ENCODE measurements at regions of chr12 and their contacts with region 1.

Region 1: GRCh38 chr12:133037207-133038005 is at the start of gene ZNF84:
- DNase-seq: peak; percentile 98
- ATAC-seq: peak; percentile 97
- H3K4me3 Mint-ChIP-seq: peak within 1 kb of the TSS; percentile 85
- H3K27ac Mint-ChIP-seq: peak within 1 kb of the TSS; percentile 94
- H3K4me1 Mint-ChIP-seq: peaks cover 10% of the 10 kb centered on the region
- H3K27me3 Mint-ChIP-seq: no peaks in the 10 kb centered on the region
- total RNA-seq, gene ZNF84: 21.5 to 24.1 TPM

Region 2: DNA sequence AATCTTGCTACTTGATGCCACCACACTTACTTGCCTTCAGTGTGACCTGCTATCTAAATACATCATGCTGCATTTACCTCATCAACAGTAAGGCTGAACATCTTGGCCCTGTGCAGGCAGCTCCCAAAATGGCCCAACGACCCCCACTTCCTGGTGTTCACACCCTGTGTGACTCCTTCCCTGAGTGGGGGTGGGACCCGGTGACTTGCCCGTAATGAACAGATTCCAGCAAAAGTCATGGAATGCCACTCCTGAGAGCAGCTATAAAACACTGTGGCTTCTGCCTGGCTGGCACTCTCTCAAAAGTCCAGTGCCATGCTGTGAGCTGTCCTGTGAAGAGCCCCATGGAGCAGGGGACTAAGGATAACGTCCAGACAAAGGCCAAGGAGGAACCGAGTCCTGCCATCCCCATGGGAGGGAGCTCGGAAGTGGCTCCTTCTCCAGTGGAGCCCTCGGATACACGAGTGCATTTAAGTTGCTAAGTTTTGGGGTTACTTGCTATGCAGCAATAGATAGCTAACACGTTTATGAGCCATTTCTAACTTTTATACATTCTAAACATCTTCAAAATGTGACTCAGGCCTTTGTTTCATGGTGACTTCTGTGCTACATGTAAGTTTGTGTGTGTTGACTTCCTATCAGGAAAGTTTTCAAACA is 385.8 kb before region 1 on chr12:
- CTCF ChIA-PET with region 1: no interaction called
- POLR2A ChIA-PET with region 1: no interaction called
- intact Hi-C with region 1: no loop called
- DNase-seq: no peak
- ATAC-seq: no peak
- H3K4me3 Mint-ChIP-seq: no peak overlapping the region
- H3K27ac Mint-ChIP-seq: no peak overlapping the region
- H3K4me1 Mint-ChIP-seq: peaks cover 2% of the 10 kb centered on the region
- H3K27me3 Mint-ChIP-seq: no peaks in the 10 kb centered on the region

Region 3: DNA sequence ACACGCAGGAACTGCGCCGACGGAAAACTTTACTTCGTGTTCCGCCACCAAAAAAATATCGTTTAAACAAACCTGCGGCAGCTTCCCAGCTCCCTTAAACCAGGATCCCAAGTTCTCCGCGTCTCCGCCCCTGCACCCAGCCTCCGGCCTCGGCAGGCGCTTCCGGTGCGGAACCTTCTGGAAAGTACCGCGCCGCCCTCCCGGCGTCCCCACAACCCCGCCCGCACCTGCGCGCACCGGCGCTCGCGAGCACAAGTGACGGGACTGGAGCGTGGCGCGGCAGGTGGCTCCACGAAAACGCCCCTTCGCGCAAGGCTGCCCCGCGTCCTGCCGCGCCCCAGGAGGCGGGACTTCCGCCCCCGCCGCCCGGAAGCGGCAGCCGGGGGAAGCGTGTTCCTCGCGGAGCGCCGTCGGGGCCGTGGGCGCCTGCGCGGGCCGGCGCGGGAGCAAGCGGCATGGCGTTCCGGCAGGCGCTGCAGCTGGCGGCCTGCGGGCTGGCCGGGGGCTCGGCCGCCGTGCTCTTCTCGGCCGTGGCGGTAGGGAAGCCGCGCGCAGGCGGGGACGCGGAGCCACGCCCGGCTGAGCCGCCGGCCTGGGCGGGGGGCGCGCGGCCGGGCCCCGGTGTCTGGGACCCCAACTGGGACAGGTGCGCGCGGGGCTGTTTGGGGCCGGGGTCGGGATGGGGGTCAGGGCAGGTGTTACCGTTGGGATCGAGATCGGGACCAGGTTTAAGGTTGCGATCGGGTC is 326.8 kb before region 1 on chr12 and contains the start of gene PGAM5:
- CTCF ChIA-PET with region 1: no interaction called
- POLR2A ChIA-PET with region 1: no interaction called
- intact Hi-C with region 1: loop called in 1 of 2 experiments (anchors 1 kb)
- DNase-seq: peak; percentile 92
- ATAC-seq: peak; percentile 92
- H3K4me3 Mint-ChIP-seq: peak within 1 kb of the TSS; percentile 75
- H3K27ac Mint-ChIP-seq: peak within 1 kb of the TSS; percentile 66
- H3K4me1 Mint-ChIP-seq: peaks cover 24% of the 10 kb centered on the region
- H3K27me3 Mint-ChIP-seq: no peaks in the 10 kb centered on the region
- total RNA-seq, gene PGAM5: 65.6 to 74.0 TPM

Region 4: GRCh38 chr12:132956011-132956788 is 81.2 kb before region 1 on chr12 and contains the start of gene ZNF605:
- CTCF ChIA-PET with region 1: no interaction called
- POLR2A ChIA-PET with region 1: no interaction called
- intact Hi-C with region 1: loop called in 1 of 2 experiments (anchors 1 kb)
- DNase-seq: peak; percentile 93
- ATAC-seq: peak; percentile 91
- H3K4me3 Mint-ChIP-seq: peak within 1 kb of the TSS; percentile 93
- H3K27ac Mint-ChIP-seq: peak within 1 kb of the TSS; percentile 88
- H3K4me1 Mint-ChIP-seq: peaks cover 22% of the 10 kb centered on the region
- H3K27me3 Mint-ChIP-seq: no peaks in the 10 kb centered on the region
- total RNA-seq, gene ZNF605: 8.0 to 8.3 TPM

Region 5: DNA sequence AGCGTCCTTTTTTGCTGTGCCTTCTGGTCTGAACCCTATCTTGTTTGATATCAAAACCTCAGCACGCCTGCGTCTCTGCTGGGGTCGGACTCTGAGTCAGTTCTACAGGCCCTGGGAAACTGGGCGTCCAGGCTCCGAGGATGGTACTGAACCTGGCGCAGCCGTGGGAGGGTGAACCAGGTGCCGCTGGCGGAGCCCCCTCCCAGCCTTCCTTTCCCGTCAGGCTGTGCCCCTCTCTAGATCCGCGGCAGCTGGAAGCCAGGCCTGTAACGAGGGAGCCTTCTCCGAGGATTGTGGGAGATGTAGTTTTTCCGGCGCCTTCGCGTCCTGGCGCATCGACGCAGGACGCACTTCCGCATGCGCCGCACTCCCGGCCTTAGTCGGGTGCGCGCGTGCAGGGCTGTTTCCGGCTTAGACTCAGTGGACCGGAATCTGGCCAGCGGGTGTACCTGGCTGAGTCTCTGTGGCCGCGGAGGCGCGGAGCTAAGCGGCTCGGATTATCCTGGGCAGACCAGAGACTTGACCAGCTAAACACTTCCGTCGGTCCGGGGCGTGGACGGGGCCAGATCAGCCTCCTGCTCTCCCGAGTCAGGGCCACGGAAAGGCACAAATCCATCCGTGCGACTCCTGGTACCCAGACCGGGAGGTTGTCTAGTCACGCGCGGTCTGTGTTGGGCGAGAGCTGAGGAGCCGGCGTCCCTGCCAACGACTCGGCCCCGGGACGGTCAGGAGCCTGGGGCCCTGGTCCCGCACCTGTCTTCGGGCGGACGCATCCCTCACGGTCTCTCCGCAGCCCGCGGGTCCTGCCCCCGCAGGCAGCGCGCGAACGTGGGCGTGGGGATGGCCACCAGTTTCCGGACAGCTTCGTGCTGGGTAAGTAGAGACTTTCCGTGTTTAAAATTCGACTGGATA is 51.1 kb before region 1 on chr12 and contains the start of gene ZNF26:
- CTCF ChIA-PET with region 1: no interaction called
- POLR2A ChIA-PET with region 1: no interaction called
- intact Hi-C with region 1: loop called (anchors 1 kb)
- DNase-seq: peak; percentile 94
- ATAC-seq: peak; percentile 97
- H3K4me3 Mint-ChIP-seq: peak within 1 kb of the TSS; percentile 79
- H3K27ac Mint-ChIP-seq: peak within 1 kb of the TSS; percentile 96
- H3K4me1 Mint-ChIP-seq: peaks cover 26% of the 10 kb centered on the region
- H3K27me3 Mint-ChIP-seq: peaks cover 4% of the 10 kb centered on the region
- total RNA-seq, gene ZNF26: 12.3 to 17.0 TPM

Region 6: GRCh38 chr12:133023566-133023965 is 13.8 kb before region 1 on chr12:
- CTCF ChIA-PET with region 1: no interaction called
- POLR2A ChIA-PET with region 1: no interaction called
- intact Hi-C with region 1: no loop called
- DNase-seq: no peak
- ATAC-seq: no peak
- H3K4me3 Mint-ChIP-seq: no peak overlapping the region
- H3K27ac Mint-ChIP-seq: no peak overlapping the region
- H3K4me1 Mint-ChIP-seq: no peaks in the 10 kb centered on the region
- H3K27me3 Mint-ChIP-seq: no peaks in the 10 kb centered on the region

Region 7: DNA sequence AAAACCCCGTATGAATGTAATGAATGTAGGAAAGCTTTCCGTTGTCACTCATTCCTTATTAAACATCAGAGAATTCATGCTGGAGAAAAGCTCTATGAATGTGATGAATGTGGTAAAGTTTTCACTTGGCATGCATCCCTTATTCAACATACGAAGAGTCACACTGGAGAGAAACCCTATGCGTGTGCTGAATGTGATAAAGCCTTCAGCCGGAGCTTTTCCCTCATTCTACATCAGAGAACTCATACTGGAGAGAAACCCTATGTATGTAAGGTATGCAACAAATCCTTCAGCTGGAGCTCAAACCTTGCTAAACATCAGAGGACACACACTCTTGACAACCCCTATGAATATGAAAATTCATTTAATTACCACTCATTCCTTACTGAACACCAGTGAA is 68.8 kb after region 1 on chr12:
- CTCF ChIA-PET with region 1: no interaction called
- POLR2A ChIA-PET with region 1: no interaction called
- intact Hi-C with region 1: no loop called
- DNase-seq: no peak
- ATAC-seq: no peak
- H3K4me3 Mint-ChIP-seq: no peak overlapping the region
- H3K27ac Mint-ChIP-seq: no peak overlapping the region
- H3K4me1 Mint-ChIP-seq: peaks cover 2% of the 10 kb centered on the region
- H3K27me3 Mint-ChIP-seq: no peaks in the 10 kb centered on the region

Region 8: DNA sequence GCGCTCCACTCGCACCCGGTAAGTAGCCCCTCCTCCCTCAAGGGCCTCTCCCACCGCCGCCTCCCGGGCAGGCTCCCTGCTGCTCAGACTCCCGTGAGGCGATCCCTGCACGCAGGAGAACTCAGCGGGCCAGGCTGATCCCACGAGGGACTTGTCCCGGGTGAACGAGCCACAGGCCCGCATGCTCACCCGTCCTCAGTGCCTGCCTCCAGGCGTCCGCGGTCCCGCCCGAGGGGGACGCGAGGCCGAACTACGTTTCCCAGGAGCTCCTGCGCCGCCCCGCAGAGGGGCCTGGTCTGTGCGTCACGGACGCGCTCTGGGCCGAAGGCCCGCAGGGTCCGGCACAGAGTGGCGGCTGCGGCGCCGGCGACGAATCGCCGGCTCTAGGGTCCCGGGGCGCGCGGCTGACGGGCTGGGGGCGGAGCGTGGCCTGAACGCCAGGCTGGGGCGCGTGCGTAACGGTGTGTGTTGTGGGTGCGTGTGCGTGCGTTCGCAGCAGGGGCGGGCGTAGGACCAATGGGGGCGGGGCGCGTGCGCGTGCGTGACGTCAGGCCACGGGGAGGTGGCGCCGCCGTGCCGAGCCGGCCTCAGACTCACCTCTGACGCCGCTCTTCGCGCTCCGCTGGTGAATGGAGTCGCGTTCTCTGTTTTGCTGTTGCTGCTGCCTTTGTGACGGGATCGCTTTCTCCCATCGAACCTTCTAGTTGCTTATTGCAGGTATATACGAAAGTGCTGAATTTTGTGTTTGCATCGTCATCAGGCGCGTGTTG is 92.8 kb after region 1 on chr12 and contains the starts of genes ZNF10 and ZNF891:
- CTCF ChIA-PET with region 1: no interaction called
- POLR2A ChIA-PET with region 1: no interaction called
- intact Hi-C with region 1: loop called (anchors 1 kb)
- DNase-seq: peak; percentile 98
- ATAC-seq: peak; percentile 90
- H3K4me3 Mint-ChIP-seq: peak within 1 kb of the TSS; percentile 86
- H3K27ac Mint-ChIP-seq: peak within 1 kb of the TSS; percentile 98
- H3K4me1 Mint-ChIP-seq: peaks cover 15% of the 10 kb centered on the region
- H3K27me3 Mint-ChIP-seq: no peaks in the 10 kb centered on the region
- total RNA-seq, gene ZNF10: 4.8 to 5.1 TPM
- total RNA-seq, gene ZNF891: 1.9 to 2.1 TPM

Region 9: DNA sequence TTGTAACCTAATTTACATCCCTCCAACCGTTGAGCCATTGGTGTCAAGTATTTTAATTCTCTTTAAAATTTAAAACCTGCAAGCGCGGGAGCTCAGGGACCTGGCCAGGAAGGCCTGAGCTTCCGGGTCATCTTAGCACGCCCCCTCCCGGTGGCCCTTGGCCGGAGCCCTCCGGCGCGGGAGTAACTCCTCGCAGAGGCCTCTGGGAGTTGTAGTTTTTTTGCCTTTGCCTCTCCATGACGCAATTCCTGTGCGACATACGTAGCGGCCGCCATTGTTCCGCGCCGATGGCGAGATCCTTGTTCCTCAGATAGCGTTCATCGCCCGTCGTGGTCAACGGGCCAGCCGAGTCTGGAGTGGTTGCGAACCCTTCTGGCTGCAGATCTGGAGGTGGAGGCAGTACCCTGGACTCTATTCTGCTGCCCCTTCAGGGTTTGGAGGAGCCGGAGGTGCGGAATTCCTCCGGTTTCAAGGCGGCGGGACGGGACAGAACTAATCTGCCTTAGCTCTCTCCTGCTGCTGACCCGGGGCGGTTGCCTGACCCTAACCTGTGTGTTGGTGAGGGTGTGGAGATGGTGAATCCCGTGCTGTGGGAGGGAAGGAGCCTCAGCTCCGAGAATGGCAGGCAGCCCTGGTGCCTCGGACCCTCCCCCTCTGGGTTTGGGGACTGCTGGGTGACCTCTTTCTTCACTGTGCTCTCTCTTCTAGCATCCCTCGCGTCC is 144.0 kb after region 1 on chr12 and contains the start of gene ZNF268:
- CTCF ChIA-PET with region 1: interaction called, 3 read pairs
- POLR2A ChIA-PET with region 1: no interaction called
- intact Hi-C with region 1: loop called in 1 of 2 experiments (anchors 1 kb)
- DNase-seq: peak; percentile 95
- ATAC-seq: peak; percentile 96
- H3K4me3 Mint-ChIP-seq: peak within 1 kb of the TSS; percentile 90
- H3K27ac Mint-ChIP-seq: peak within 1 kb of the TSS; percentile 95
- H3K4me1 Mint-ChIP-seq: peaks cover 11% of the 10 kb centered on the region
- H3K27me3 Mint-ChIP-seq: no peaks in the 10 kb centered on the region
- total RNA-seq, gene ZNF268: 14.0 to 14.6 TPM

Measured in activated CD4-positive, alpha-beta T cell treated with anti-CD3 and anti-CD28 coated beads for 36 hours (primary cell).